ENCODE measurements at regions of chr1 and their contacts with region 1.

Region 1: DNA sequence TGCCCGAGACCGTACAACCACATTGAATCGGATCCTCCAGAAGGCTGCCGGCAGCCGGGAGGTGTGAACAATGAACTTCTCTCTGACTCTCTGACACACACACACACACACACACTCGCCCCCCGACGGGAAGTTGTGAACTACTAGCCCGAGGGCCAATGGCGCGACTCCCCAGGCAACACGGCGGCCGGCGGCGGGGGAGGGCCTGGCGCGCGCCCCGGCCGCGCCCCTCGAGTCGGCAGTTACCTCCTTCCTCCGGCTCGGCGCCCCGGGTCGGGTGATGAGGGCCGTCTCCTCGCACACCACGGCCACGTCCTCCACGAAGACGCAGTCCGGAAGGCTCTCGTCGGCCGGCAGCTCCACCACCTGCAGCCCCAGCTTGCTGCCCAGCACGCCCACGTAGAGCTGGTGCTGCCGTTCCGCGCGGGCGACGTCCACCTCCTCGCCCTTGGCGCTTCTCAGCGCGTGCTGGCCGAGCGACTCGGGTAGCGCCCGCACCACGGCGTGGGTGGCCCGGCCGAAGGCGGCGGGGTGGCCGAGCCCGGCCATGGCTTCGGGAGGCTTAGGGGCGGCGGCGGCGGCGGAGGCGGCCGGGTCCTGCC is 361 bp downstream of the DDAH1 start:
- DNase-seq: peak; percentile 26 to 69 (median 57)
- H3K4me3 ChIP-seq: peak overlapping the region; percentile 75
- H3K27ac ChIP-seq: peak overlapping the region; percentile 30 to 32
- H3K4me1 ChIP-seq: peaks cover 3% of the 10 kb centered on the region
- H3K27me3 ChIP-seq: no peaks in the 10 kb centered on the region
- CTCF ChIP-seq: no peak
- EP300 ChIP-seq: no peak
- POLR2A ChIP-seq: no peak

Region 2: DNA sequence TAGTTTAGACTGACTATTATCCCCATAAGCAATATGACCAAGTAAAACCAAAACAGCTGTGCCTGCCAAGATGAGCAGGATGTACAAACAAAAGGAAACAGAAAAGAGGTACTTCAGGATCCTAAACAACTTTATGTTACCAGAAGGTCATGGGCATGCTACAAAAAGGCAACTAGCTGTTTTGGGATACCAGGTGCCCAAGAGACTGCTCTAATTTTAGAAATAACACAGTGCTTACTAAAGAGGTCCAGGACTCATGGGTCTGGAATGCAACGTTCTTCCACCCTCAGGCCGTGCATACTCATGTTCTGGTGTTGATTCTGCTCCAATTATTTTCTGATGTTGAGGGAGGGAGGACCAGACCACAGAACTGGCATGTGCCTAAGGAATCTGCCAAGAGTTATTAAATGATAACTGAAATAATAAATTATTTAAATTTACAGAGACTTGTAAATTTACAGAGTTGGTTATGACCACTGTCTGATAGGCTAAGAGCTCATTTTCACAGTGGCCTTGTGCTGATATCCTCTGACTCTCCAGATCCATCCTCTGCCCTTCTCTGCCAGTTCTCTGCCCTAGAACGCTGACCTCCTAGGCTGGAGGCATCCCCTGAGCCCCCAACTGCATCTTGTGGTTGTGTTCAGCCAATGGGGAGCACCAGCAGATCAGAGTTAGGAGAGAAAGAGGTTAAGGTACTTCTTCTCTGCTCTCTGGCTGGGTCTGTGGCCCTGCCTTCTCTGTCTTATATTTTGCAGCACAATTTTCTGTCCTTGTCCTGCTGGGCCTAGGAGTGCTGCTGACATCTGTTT is 150.5 kb before region 1 on chr1:
- intact Hi-C with region 1: loop called in 1 of 4 experiments (anchors 10 kb)
- DNase-seq: no peak
- H3K4me3 ChIP-seq: no peak overlapping the region
- H3K27ac ChIP-seq: no peak overlapping the region
- H3K4me1 ChIP-seq: peaks cover 8% of the 10 kb centered on the region
- H3K27me3 ChIP-seq: no peaks in the 10 kb centered on the region
- CTCF ChIP-seq: no peak
- EP300 ChIP-seq: no peak
- POLR2A ChIP-seq: no peak

Region 3: GRCh38 chr1:85438353-85438752 is 26.2 kb before region 1 on chr1:
- intact Hi-C with region 1: no loop called
- DNase-seq: no peak
- H3K4me3 ChIP-seq: no peak overlapping the region
- H3K27ac ChIP-seq: no peak overlapping the region
- H3K4me1 ChIP-seq: no peaks in the 10 kb centered on the region
- H3K27me3 ChIP-seq: no peaks in the 10 kb centered on the region
- CTCF ChIP-seq: no peak
- EP300 ChIP-seq: no peak
- POLR2A ChIP-seq: no peak

Measured in ovary (tissue), 10 donors.